MCF 10A (cell line): ENCODE measurements at regions of chr17 and their contacts with region 1.

Region 1: GRCh38 chr17:29710891-29711418 is 88.2 kb upstream of the CORO6 start:
- DNase-seq: peak; percentile 73
- H3K4me3 Mint-ChIP-seq: peak overlapping the region; percentile 42
- H3K27ac Mint-ChIP-seq: peak overlapping the region; percentile 77
- H3K4me1 Mint-ChIP-seq: peaks cover 32% of the 10 kb centered on the region
- H3K27me3 Mint-ChIP-seq: no peaks in the 10 kb centered on the region
- CTCF ChIP-seq: no peak

Region 2: DNA sequence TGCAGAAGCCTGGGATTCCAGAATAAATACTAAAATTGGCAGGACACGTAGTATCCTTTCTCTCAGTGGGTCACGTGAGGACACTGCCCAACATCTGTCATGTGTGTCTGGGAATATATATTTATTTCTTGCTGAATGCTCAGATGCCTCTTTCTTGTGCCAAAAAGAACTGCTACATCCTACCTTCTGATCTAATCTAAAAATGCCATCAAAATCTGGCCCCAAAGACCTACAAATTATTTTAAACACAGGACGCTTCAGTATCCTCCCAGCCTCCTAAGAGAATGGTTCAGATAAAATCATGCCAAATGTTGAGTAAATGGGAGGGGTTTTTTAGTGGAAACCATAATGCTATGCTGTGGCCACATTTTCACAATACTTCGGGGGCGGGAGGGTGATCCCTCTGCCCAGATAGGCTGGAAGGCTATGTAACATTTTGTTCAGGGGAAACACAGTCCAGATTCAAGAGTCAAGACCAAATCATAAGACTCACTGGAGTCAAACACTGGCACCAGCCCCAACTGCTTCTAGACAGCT is 65.4 kb before region 1 on chr17:
- CTCF ChIA-PET with region 1: interaction called, 5 read pairs
- POLR2A ChIA-PET with region 1: interaction called, 11 read pairs
- intact Hi-C with region 1: no loop called
- DNase-seq: peak; percentile 63
- H3K4me3 Mint-ChIP-seq: peak overlapping the region; percentile 45
- H3K27ac Mint-ChIP-seq: peak overlapping the region; percentile 87
- H3K4me1 Mint-ChIP-seq: peaks cover 21% of the 10 kb centered on the region
- H3K27me3 Mint-ChIP-seq: no peaks in the 10 kb centered on the region
- CTCF ChIP-seq: no peak

Region 3: DNA sequence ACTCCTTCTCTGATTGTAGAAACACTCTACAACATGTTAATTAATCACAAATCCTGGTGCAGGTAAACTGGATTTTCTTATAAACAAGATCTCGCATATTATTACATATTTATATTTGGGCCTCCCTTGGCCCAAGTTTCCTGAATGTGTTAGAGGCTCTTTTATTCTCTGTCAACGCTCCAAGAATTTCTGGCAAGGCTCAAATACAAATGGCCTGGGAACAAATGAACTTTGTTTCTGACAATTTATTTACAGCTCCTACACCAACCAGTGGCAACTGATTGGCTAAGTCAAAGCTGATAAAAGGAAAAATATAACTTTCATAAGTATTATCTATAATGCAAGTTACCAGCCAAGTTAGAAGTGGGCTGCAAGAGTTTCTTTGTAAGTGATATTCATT is 23.4 kb before region 1 on chr17:
- CTCF ChIA-PET with region 1: interaction called, 4 read pairs
- POLR2A ChIA-PET with region 1: interaction called, 19 read pairs
- intact Hi-C with region 1: no loop called
- DNase-seq: no peak
- H3K4me3 Mint-ChIP-seq: no peak overlapping the region
- H3K27ac Mint-ChIP-seq: no peak overlapping the region
- H3K4me1 Mint-ChIP-seq: no peaks in the 10 kb centered on the region
- H3K27me3 Mint-ChIP-seq: no peaks in the 10 kb centered on the region
- CTCF ChIP-seq: no peak

Region 4: DNA sequence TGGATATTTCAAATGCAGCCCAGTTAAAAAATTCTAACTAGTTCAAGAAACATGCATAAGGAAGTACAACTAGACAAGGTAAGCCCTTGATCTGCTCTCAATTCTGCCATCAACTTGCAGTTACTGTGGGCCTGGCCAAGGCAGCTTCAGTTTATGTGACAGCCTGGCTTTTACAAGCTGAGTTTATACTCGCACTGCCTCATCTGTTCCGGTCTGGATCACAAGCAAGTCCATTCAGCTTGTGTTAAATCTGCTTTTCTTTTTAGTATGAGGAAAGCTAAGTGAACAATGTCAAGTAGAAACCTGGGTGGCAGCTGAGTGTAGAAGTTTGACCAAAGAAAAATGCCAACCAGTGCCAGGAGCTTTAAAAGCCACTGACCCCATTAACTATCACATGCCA is 11.7 kb before region 1 on chr17:
- CTCF ChIA-PET with region 1: interaction called, 3 read pairs
- POLR2A ChIA-PET with region 1: interaction called, 12 read pairs
- intact Hi-C with region 1: no loop called
- DNase-seq: no peak
- H3K4me3 Mint-ChIP-seq: no peak overlapping the region
- H3K27ac Mint-ChIP-seq: no peak overlapping the region
- H3K4me1 Mint-ChIP-seq: no peaks in the 10 kb centered on the region
- H3K27me3 Mint-ChIP-seq: no peaks in the 10 kb centered on the region
- CTCF ChIP-seq: no peak

Region 5: DNA sequence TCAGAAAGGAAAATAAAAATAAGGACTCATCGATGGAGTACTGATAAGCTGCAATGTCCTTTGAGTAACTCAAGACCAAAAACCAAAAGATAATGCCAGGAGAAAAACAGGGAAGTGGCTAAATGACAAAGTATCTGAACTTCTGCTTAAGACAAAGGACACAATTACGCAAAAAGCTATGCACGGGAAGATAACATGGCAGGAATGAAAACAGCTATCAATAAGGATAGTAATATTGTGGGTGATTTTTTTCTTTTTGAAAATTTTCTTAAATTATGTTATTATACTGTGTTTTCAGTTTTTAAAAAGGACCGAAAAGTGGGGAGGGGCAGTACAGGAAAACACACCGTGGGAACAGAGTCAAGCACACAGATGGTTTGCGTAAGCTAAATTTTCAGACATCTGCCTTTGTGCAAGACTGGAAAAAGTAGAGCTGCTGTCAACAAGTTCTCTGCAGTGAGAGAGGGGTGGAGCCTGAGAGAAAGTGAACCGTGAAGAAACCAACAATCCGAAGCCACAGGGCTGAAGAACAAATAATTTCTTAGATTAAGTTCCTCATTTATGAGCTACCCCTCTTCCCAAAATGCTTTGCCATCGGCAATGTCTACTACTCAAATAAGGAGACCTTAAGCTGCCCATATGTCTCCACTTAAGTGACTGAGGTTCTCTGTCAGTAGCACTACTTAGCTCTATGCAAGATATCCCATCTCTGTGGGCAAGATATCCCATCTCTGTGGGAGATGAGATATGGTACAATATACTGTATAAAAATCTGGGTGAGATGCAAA is 11.7 kb after region 1 on chr17:
- CTCF ChIA-PET with region 1: interaction called, 4 read pairs
- POLR2A ChIA-PET with region 1: interaction called, 16 read pairs
- intact Hi-C with region 1: no loop called
- DNase-seq: peak; percentile 10
- H3K4me3 Mint-ChIP-seq: no peak overlapping the region
- H3K27ac Mint-ChIP-seq: no peak overlapping the region
- H3K4me1 Mint-ChIP-seq: peaks cover 31% of the 10 kb centered on the region
- H3K27me3 Mint-ChIP-seq: no peaks in the 10 kb centered on the region
- CTCF ChIP-seq: no peak

Region 6: GRCh38 chr17:29760761-29761696 is 50.1 kb after region 1 on chr17:
- CTCF ChIA-PET with region 1: interaction called, 3 read pairs
- POLR2A ChIA-PET with region 1: interaction called, 17 read pairs
- intact Hi-C with region 1: no loop called
- DNase-seq: peak; percentile 86
- H3K4me3 Mint-ChIP-seq: peak overlapping the region; percentile 89
- H3K27ac Mint-ChIP-seq: peak overlapping the region; percentile 3
- H3K4me1 Mint-ChIP-seq: peaks cover 16% of the 10 kb centered on the region
- H3K27me3 Mint-ChIP-seq: no peaks in the 10 kb centered on the region
- CTCF ChIP-seq: no peak